OCI-LY7 (cell line): ENCODE measurements at regions of chr10 and their contacts with region 1.

Region 1: GRCh38 chr10:15725603-15726002 is 5.9 kb upstream of the ITGA8 start:
- DNase-seq: peak; percentile 22
- H3K4me3 ChIP-seq: no peak overlapping the region
- H3K27ac ChIP-seq: no peak overlapping the region
- H3K4me1 ChIP-seq: no peaks in the 10 kb centered on the region
- CTCF ChIP-seq: peak; percentile 72

Region 2: GRCh38 chr10:15652117-15652516 is 73.5 kb before region 1 on chr10:
- CTCF ChIA-PET with region 1: no interaction called
- POLR2A ChIA-PET with region 1: no interaction called
- intact Hi-C with region 1: loop called (anchors 2 kb)
- DNase-seq: no peak
- H3K4me3 ChIP-seq: no peak overlapping the region
- H3K27ac ChIP-seq: no peak overlapping the region
- H3K4me1 ChIP-seq: no peaks in the 10 kb centered on the region
- CTCF ChIP-seq: no peak